Activated T-helper 1 cell treated with anti-CD3 and anti-CD28 coated beads, Interleukin-12 subunit alpha, Interleukin-12 subunit beta, Interleukin-2, Interleukin-4 antibody, amounts not matched to agents 30 ng/mL and 10 ng/mL and 1 ng/mL, durations not matched to agents 14 hours and 24 hours and 36 hours (primary cell): ENCODE measurements at regions of chr15 and their contacts with region 1.

Region 1: DNA sequence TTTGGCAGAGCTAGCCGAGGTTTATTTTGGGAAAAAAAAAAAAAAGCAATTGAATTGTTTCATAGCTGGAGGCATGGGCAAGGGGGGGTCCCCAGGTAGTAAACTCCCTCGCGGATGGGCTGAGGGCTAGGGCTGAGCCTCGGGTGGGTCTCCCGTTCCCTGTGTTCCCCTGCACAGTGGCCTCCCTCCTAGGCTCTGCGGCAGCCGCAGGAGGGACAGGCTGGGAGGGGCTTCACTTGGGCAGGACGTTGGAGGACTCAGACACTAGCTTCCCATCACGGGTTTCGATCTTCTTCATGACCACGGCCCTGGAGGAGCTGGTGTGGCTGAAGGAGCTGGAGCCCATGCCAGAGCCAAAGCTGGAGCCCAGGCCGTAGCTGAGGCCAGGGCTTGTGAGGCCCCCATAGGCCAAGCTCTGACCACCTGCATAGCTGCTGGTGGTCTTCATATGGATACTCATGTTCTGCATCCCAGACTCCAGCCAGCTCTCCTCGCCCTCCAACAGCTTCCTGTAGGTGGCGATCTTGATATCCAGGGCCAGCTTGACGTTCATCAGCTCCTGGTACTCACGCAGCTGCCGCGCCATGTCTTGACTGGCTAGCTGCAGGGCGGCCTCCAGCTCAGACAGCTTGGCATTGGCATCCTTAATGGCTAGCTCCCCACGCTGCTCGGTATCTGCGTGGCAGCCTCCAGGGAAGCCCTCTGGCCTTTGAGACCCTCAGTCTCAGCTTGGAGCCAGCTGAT is 64.0 kb upstream of the CDAN1 start:
- DNase-seq: no peak
- H3K4me3 Mint-ChIP-seq: no peak overlapping the region
- H3K27ac Mint-ChIP-seq: no peak overlapping the region
- H3K4me1 Mint-ChIP-seq: peaks cover 15% of the 10 kb centered on the region
- H3K27me3 Mint-ChIP-seq: no peaks in the 10 kb centered on the region

Region 2: DNA sequence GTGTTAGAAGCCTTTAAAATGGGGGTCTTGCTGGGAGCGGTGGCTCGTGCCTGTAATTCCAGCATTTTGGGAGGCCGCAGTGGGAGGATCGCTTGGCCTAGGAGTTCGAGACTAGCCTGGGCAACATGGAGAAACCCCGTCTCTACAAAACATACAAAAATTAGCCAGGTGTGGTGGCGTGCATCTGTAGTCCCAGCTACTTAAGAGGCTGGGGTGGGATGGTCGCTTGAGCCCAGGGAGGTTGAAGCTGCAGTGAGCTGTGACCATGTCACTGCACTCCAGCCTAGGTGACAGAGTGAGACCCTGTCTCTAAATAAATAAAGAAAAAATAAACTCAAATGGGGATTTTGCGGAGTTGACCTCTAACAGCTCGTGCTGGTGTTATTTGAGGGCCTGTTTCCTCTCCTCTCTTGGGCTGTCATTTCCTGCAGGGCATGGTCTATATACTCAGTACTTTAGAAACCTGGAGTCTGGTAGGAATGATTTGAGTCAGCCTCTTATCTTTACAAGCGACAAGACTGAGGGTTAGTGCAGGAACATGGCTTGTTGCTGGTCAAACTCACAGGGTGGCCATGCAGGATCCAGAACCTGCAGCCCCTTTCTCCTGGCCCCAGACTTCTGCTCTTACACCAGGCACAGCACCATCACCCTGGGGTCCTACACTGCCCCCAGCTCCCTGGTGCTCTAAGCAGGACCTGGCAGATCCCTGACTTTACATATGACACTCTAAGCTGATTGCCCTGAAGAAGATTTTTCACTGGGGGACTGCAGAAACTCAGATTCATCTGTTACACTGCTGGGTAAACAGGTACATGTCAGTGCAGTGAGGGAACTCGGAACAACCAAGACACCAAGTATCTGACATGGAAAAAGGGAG is 843.6 kb before region 1 on chr15:
- intact Hi-C with region 1: no loop called
- DNase-seq: no peak
- H3K4me3 Mint-ChIP-seq: peak overlapping the region; percentile 26
- H3K27ac Mint-ChIP-seq: peak overlapping the region; percentile 63
- H3K4me1 Mint-ChIP-seq: peaks cover 52% of the 10 kb centered on the region
- H3K27me3 Mint-ChIP-seq: no peaks in the 10 kb centered on the region

Region 3: GRCh38 chr15:42704492-42704926 is 96.4 kb before region 1 on chr15:
- intact Hi-C with region 1: no loop called
- DNase-seq: peak; percentile 45
- H3K4me3 Mint-ChIP-seq: no peak overlapping the region
- H3K27ac Mint-ChIP-seq: no peak overlapping the region
- H3K4me1 Mint-ChIP-seq: peaks cover 6% of the 10 kb centered on the region
- H3K27me3 Mint-ChIP-seq: no peaks in the 10 kb centered on the region

Region 4: GRCh38 chr15:42772144-42772543 is 28.8 kb before region 1 on chr15:
- intact Hi-C with region 1: no loop called
- DNase-seq: no peak
- H3K4me3 Mint-ChIP-seq: no peak overlapping the region
- H3K27ac Mint-ChIP-seq: no peak overlapping the region
- H3K4me1 Mint-ChIP-seq: no peaks in the 10 kb centered on the region
- H3K27me3 Mint-ChIP-seq: no peaks in the 10 kb centered on the region

Region 5: GRCh38 chr15:42929306-42929848 is 128.5 kb after region 1 on chr15:
- intact Hi-C with region 1: loop called (anchors 5 kb)
- DNase-seq: no peak
- H3K4me3 Mint-ChIP-seq: no peak overlapping the region
- H3K27ac Mint-ChIP-seq: no peak overlapping the region
- H3K4me1 Mint-ChIP-seq: no peaks in the 10 kb centered on the region
- H3K27me3 Mint-ChIP-seq: peaks cover 19% of the 10 kb centered on the region